ENCODE measurements at regions of chr17 and their contacts with region 1.

Region 1: GRCh38 chr17:78250891-78251794 is 19.7 kb downstream of the TMEM235 start:
- DNase-seq: peak; percentile 68 to 89 (median 83)
- ATAC-seq: peak; percentile 35
- H3K4me3 ChIP-seq: peak overlapping the region; percentile 23 to 51
- H3K4me3 Mint-ChIP-seq: peak overlapping the region; percentile 86
- H3K27ac ChIP-seq: peak overlapping the region in 1 of 2 experiments; percentile 56
- H3K27ac Mint-ChIP-seq: peak overlapping the region; percentile 99
- H3K4me1 ChIP-seq: peaks cover 49% of the 10 kb centered on the region
- H3K4me1 Mint-ChIP-seq: peaks cover 48% of the 10 kb centered on the region
- H3K27me3 ChIP-seq: no peaks in the 10 kb centered on the region
- H3K27me3 Mint-ChIP-seq: no peaks in the 10 kb centered on the region
- CTCF ChIP-seq: peak; percentile 99

Region 2: DNA sequence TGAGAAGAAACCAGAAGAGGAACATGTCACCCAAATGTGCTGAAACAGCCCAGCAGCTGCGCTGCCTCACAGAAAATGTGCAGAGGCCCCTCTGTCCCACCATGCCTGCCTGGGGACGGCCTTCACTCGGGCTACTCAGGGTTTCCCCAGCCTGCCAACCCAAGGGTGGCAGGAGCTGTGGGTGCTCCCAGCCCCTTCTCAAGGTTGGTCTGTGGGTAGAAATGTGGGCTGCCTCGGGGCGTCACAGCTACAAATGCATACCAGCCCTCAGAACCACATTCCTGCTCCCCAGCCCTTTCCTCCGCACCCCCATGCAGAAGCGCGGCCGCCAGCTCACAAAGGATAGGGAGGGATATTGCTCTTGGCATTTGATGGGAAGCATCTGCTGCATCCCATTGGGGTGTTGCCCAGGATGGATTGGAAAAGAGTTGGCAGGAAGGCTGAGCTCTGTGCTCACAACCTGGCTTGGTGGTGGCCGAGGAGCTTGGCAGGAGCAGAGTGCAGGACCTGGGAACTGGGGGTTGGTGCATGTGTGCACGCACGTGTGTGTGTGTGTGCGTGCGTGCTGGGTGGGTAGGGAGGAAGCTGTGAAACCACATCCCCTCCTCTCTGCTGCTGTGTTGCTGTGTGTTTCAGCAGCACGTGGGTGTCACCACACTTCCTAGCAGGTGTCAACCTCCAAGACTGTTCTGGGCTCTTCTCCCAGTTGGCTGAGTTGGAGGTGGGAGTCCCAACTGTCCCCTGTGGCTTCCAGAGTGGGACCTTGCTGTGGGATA is 806.0 kb before region 1 on chr17:
- CTCF ChIA-PET with region 1: no interaction called
- POLR2A ChIA-PET with region 1: no interaction called
- intact Hi-C with region 1: loop called in 1 of 2 experiments (anchors 5 kb)
- DNase-seq: peak; percentile 75 to 99 (median 85)
- ATAC-seq: peak; percentile 62
- H3K4me3 ChIP-seq: peak overlapping the region; percentile 32 to 38
- H3K4me3 Mint-ChIP-seq: peak overlapping the region; percentile 82
- H3K27ac ChIP-seq: peak overlapping the region; percentile 64 to 72
- H3K27ac Mint-ChIP-seq: peak overlapping the region; percentile 97
- H3K4me1 ChIP-seq: peaks cover 92% of the 10 kb centered on the region
- H3K4me1 Mint-ChIP-seq: peaks cover 90% of the 10 kb centered on the region
- H3K27me3 ChIP-seq: no peaks in the 10 kb centered on the region
- H3K27me3 Mint-ChIP-seq: no peaks in the 10 kb centered on the region
- CTCF ChIP-seq: no peak

Region 3: DNA sequence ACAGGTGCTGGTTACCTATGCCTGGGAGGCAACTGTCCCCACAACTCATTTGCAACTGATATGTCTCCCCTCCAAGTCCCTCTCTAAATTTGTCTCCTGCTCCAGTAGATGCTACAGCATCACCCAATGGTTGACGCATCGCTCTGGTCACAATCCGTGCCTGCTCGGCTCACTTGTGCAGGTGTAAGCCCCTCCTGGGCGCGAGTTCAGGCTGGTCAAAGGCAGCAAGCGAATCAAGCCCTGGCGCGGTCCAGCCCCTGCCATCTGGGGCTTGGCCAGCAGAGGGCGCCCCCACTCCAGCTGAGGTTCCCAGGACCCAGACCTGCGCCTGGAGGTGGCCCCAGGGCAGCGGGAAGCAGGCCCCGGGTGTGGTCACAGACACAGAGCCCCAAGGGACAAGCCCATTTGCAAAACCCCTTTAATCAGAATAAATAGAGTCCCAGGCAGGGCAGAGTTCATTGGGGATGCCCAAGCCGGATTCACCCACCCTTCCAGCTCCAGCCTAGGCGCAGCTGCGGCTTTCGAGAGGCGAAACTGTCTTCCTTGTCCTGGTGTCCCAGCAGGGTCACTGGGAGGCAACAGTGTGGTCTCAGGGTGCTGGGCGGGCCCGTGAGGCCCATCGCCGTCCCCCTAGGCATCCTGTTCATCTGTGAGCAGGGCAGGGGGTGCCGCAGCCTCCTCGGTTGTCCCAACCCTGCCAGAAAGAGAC is 138.5 kb before region 1 on chr17:
- CTCF ChIA-PET with region 1: interaction called, 9 read pairs
- POLR2A ChIA-PET with region 1: interaction called, 4 read pairs
- intact Hi-C with region 1: loop called in 1 of 2 experiments (anchors 2 kb)
- DNase-seq: peak; percentile 62 to 91 (median 78)
- ATAC-seq: peak; percentile 67
- H3K4me3 ChIP-seq: no peak overlapping the region
- H3K4me3 Mint-ChIP-seq: peak overlapping the region; percentile 42
- H3K27ac ChIP-seq: peak overlapping the region in 1 of 2 experiments; percentile 74
- H3K27ac Mint-ChIP-seq: peak overlapping the region; percentile 90
- H3K4me1 ChIP-seq: peaks cover 45% of the 10 kb centered on the region
- H3K4me1 Mint-ChIP-seq: peaks cover 42% of the 10 kb centered on the region
- H3K27me3 ChIP-seq: no peaks in the 10 kb centered on the region
- H3K27me3 Mint-ChIP-seq: no peaks in the 10 kb centered on the region
- CTCF ChIP-seq: peak; percentile 99

Region 4: DNA sequence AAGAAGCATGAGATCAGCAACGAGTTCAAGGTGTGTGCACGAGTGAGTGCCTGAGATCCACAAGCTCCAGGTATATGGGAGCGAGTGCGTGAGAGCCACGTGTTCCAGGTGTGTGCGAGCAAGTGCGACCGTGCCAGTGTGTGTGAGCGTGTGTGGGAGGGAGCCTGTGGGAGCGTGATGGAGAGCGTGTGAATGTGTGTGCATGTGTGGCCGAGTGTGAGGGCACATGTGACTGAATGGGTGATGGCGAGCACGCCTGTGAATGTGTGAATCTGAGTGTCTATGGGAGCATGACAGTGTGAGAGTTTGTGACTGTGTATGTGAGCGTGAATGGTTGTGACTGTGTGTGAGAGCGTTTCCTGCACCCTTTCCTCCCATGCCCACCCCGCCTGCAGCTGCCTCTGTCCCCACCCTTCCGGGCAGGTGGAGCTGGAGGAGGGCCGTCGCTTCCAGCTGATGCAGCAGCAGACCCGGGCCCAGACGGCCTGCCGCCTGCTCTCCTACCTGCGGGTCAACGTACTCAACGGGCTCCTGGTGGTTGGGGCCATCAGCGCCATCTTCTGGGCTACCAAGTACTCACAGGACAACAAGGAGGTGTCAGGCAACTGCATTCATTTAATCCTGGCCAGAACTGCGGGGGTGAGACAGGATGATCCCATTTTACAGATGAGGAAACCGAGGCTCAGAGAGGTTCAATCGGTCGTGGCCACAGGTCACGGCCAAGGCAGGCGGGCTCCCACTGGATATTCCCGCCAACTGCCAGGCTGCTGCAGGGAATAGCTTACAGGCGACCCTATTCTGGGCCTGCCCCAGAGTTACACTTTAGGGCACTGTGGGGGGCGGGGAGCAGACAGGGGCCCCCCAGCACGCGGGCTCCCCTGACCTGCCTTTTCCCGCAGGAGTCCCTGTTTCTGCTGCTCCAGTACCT is 116.9 kb before region 1 on chr17:
- CTCF ChIA-PET with region 1: interaction called, 11 read pairs
- POLR2A ChIA-PET with region 1: interaction called, 4 read pairs
- intact Hi-C with region 1: loop called (anchors 2 kb)
- DNase-seq: peak; percentile 65 to 92 (median 80)
- ATAC-seq: peak; percentile 29
- H3K4me3 ChIP-seq: peak overlapping the region; percentile 95 to 97
- H3K4me3 Mint-ChIP-seq: peak overlapping the region; percentile 79
- H3K27ac ChIP-seq: peak overlapping the region; percentile 37 to 69
- H3K27ac Mint-ChIP-seq: peak overlapping the region; percentile 88
- H3K4me1 ChIP-seq: peaks cover 74% of the 10 kb centered on the region
- H3K4me1 Mint-ChIP-seq: peaks cover 72% of the 10 kb centered on the region
- H3K27me3 ChIP-seq: no peaks in the 10 kb centered on the region
- H3K27me3 Mint-ChIP-seq: no peaks in the 10 kb centered on the region
- CTCF ChIP-seq: peak; percentile 72

Region 5: GRCh38 chr17:78214706-78215061 is 36.5 kb before region 1 on chr17:
- CTCF ChIA-PET with region 1: interaction called, 4 read pairs
- POLR2A ChIA-PET with region 1: interaction called, 4 read pairs
- intact Hi-C with region 1: loop called (anchors 1 kb)
- DNase-seq: no peak
- ATAC-seq: no peak
- H3K4me3 ChIP-seq: peak overlapping the region; percentile 48 to 52
- H3K4me3 Mint-ChIP-seq: peak overlapping the region; percentile 70
- H3K27ac ChIP-seq: no peak overlapping the region
- H3K27ac Mint-ChIP-seq: no peak overlapping the region
- H3K4me1 ChIP-seq: peaks cover 7% of the 10 kb centered on the region
- H3K4me1 Mint-ChIP-seq: peaks cover 6% of the 10 kb centered on the region
- H3K27me3 ChIP-seq: no peaks in the 10 kb centered on the region
- H3K27me3 Mint-ChIP-seq: no peaks in the 10 kb centered on the region
- CTCF ChIP-seq: no peak

Region 6: DNA sequence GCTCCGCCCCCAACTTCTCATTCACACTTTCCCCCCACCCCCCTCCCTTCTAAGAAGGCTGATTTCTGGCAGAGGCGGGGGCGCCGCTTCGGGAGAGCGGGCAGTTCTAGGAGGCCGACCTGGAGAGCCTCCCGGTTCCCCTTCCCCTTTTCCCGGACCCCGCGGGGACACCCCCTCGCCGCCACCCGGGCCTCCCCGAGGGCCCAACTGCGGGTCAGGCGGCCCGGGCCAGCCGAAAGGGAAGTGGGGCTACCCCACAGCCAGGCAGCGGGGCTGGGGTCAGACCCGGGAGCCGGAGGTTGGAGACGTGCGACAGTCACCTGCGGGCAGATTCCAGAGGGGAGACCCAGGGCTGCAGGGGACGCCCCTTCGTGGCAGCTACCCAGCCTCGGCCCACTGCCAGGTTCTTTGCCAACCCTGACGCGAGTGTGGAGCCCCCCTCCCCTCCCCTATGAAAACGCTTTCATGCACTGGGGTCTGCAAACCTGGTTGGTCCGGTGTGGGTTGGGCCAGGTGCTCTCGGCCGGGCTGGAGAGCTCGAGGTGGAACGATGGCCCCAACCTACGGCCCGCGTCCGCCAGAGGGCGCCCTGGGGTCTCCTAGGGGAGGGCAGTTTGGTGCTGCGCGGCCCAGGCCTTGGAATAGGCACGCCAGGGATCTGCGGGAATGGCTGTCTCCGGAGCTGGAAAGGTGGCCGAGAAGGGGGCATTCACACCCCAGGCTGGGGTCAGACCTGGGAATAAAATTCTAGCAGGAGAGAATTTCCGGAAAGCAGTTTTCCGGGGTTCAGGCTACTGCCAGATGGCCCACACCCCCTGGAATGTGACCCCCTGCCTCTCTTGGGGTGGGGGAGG is 109.5 kb after region 1 on chr17:
- CTCF ChIA-PET with region 1: interaction called, 15 read pairs
- POLR2A ChIA-PET with region 1: interaction called, 3 read pairs
- intact Hi-C with region 1: loop called (anchors 1 kb)
- DNase-seq: peak; percentile 79 to 95 (median 87)
- ATAC-seq: no peak
- H3K4me3 ChIP-seq: peak overlapping the region; percentile 56 to 64
- H3K4me3 Mint-ChIP-seq: peak overlapping the region; percentile 88
- H3K27ac ChIP-seq: peak overlapping the region; percentile 6 to 62
- H3K27ac Mint-ChIP-seq: peak overlapping the region; percentile 87
- H3K4me1 ChIP-seq: peaks cover 31% of the 10 kb centered on the region
- H3K4me1 Mint-ChIP-seq: peaks cover 43% of the 10 kb centered on the region
- H3K27me3 ChIP-seq: no peaks in the 10 kb centered on the region
- H3K27me3 Mint-ChIP-seq: no peaks in the 10 kb centered on the region
- CTCF ChIP-seq: peak; percentile 84

Region 7: GRCh38 chr17:78781948-78782916 is 531.1 kb after region 1 on chr17 and contains the start of gene CYTH1:
- CTCF ChIA-PET with region 1: interaction called, 3 read pairs
- POLR2A ChIA-PET with region 1: no interaction called
- intact Hi-C with region 1: loop called in 1 of 2 experiments (anchors 10 kb)
- DNase-seq: peak; percentile 93 to 100 (median 98)
- ATAC-seq: peak; percentile 80
- H3K4me3 ChIP-seq: peak within 1 kb of the TSS; percentile 90 to 97
- H3K4me3 Mint-ChIP-seq: peak within 1 kb of the TSS; percentile 93
- H3K27ac ChIP-seq: peak within 1 kb of the TSS; percentile 86 to 93
- H3K27ac Mint-ChIP-seq: peak within 1 kb of the TSS; percentile 90
- H3K4me1 ChIP-seq: peaks cover 67% of the 10 kb centered on the region
- H3K4me1 Mint-ChIP-seq: peaks cover 55% of the 10 kb centered on the region
- H3K27me3 ChIP-seq: no peaks in the 10 kb centered on the region
- H3K27me3 Mint-ChIP-seq: no peaks in the 10 kb centered on the region
- CTCF ChIP-seq: no peak
- total RNA-seq, gene CYTH1: 475 to 490 TPM